BJ (cell line): ENCODE measurements at regions of chr9 and their contacts with region 1.

Region 1: GRCh38 chr9:33466565-33467495 is 6.9 kb downstream of the NOL6 start:
- DNase-seq: no peak
- H3K4me3 ChIP-seq: no peak overlapping the region
- H3K27me3 ChIP-seq: no peaks in the 10 kb centered on the region
- CTCF ChIP-seq: peak; percentile 99

Region 2: DNA sequence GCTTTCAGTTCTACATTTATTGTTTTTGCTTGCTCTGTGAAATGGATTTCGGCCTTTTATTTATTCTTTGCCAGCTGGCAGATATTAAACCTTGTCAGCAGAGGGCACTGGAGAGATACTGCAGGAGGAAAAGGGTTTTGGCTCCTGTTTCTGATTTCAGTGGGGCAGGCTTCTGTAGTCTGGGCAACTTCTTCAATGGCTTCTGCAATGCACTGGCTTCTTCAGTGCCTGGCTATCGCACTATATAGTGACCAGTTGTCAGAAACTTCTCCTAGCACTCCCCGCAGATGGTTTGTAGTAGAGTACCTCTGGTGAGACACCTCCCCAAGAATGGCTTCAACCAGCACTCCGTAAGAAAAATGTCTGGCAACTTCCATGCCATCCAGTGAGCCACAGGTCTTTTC is 179.7 kb before region 1 on chr9:
- CTCF ChIA-PET with region 1: interaction called, 20 read pairs
- POLR2A ChIA-PET with region 1: no interaction called
- DNase-seq: peak; percentile 15
- H3K4me3 ChIP-seq: no peak overlapping the region
- H3K27me3 ChIP-seq: no peaks in the 10 kb centered on the region
- CTCF ChIP-seq: peak; percentile 85

Region 3: GRCh38 chr9:33393581-33393980 is 73.2 kb before region 1 on chr9:
- CTCF ChIA-PET with region 1: interaction called, 10 read pairs
- POLR2A ChIA-PET with region 1: no interaction called
- DNase-seq: no peak
- H3K4me3 ChIP-seq: no peak overlapping the region
- H3K27me3 ChIP-seq: no peaks in the 10 kb centered on the region
- CTCF ChIP-seq: no peak

Region 4: DNA sequence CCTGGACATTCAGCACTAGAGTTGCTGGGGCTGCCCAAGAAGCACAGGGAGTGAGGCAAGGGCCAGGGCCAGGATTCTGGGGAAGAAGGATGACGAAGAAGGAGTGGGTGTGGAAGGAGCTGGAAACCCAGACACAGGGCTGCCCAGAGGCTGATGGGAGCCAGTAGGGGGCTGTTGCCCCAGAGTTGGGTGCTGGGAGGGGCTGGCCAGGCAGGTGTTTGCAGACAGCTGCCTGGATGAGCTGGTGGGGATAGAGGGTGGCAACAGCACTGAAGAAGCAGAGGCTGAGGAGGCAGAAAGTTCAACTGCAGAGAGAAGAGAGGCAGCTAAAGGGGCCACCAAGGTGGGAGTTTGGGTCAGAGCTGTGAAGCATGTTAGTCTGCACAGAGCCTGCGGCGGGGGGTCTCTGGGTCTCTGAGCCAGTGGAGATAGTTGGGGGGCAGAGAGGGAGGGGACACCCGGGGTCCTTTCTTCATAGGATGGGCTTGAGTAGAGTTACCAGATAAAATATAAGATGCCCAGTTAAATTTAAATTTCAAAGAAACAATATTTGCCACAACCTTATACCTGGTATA is 62.0 kb before region 1 on chr9:
- CTCF ChIA-PET with region 1: interaction called, 37 read pairs
- POLR2A ChIA-PET with region 1: no interaction called
- DNase-seq: no peak
- H3K4me3 ChIP-seq: no peak overlapping the region
- H3K27me3 ChIP-seq: peaks cover 4% of the 10 kb centered on the region; the same call in 1 of the 2 replicates
- CTCF ChIP-seq: no peak

Region 5: GRCh38 chr9:33436440-33436839 is 30.4 kb before region 1 on chr9:
- CTCF ChIA-PET with region 1: interaction called, 12 read pairs
- POLR2A ChIA-PET with region 1: no interaction called
- DNase-seq: no peak
- H3K4me3 ChIP-seq: no peak overlapping the region
- H3K27me3 ChIP-seq: peaks cover 14% of the 10 kb centered on the region
- CTCF ChIP-seq: no peak

Region 6: GRCh38 chr9:33452828-33453271 is 14.0 kb before region 1 on chr9:
- CTCF ChIA-PET with region 1: interaction called, 70 read pairs
- POLR2A ChIA-PET with region 1: interaction called, 6 read pairs
- DNase-seq: no peak
- H3K4me3 ChIP-seq: no peak overlapping the region
- H3K27me3 ChIP-seq: peaks cover 2% of the 10 kb centered on the region; the same call in 1 of the 2 replicates
- CTCF ChIP-seq: peak; percentile 86